PC-9 (cell line): ENCODE measurements at regions of chrX and their contacts with region 1.

Region 1: DNA sequence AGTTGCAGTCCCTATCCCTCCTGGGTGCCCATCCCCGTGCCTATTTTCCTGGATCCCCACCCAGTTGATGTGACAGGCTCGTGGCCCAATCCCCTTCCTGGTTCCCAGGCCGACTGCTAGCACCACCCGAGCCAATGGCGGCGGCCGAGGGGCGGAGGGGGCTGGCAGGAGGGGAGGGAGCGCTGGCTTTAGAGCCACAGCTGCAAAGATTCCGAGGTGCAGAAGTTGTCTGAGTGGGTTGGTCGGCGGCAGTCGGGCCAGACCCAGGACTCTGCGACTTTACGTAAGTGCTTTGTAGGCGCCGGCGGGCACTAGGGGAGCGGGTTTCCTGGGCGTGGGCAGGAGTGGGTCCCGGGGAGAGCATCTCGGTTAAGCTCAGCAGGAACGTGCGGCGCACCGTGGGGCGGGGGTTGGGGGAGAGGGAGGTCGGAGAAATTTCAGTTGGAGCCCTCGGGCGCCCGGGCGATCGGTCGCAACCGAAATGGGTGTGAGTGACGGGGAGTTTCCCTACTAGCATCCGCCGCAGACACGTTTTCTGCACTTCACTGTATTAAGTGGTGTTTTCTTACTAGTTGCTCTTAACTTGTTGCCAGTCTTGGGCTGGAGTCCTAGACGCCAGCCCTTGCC is at the start of gene PLS3:
- DNase-seq: peak; percentile 71 to 87
- H3K4me3 ChIP-seq: peak within 1 kb of the TSS; percentile 85
- H3K27ac ChIP-seq: peak within 1 kb of the TSS; percentile 96
- H3K4me1 ChIP-seq: peaks cover 40% of the 10 kb centered on the region
- H3K27me3 ChIP-seq: no peaks in the 10 kb centered on the region
- CTCF ChIP-seq: no peak; the same call in 1 of the 2 replicates
- total RNA-seq, gene PLS3: 221 and 257 TPM in 2 replicates

Region 2: DNA sequence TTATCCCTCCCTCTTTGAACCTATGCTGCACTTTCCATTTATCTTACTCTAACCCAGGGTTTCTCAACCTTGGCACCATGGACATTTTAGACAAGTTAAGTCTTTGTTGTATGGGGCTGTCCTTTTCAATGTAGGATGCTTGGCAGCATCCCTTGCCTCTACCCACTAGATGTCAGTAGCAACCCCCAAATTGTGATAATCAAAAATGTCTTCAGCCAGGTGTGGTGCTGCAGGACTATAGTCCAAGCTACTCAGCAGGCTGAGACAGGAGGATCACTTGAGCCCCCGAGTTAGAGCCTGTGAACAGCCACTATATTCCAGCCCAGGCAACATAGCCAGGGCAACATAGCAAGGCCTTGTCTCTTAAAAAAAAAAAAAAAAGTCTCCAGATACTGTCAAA is 334.2 kb before region 1 on chrX:
- CTCF ChIA-PET with region 1: no interaction called
- POLR2A ChIA-PET with region 1: no interaction called
- intact Hi-C with region 1: loop called (anchors 2 kb)
- DNase-seq: peak; percentile 27 to 63
- H3K4me3 ChIP-seq: no peak overlapping the region
- H3K27ac ChIP-seq: no peak overlapping the region
- H3K4me1 ChIP-seq: peaks cover 16% of the 10 kb centered on the region
- H3K27me3 ChIP-seq: no peaks in the 10 kb centered on the region
- CTCF ChIP-seq: peak; percentile 80

Region 3: DNA sequence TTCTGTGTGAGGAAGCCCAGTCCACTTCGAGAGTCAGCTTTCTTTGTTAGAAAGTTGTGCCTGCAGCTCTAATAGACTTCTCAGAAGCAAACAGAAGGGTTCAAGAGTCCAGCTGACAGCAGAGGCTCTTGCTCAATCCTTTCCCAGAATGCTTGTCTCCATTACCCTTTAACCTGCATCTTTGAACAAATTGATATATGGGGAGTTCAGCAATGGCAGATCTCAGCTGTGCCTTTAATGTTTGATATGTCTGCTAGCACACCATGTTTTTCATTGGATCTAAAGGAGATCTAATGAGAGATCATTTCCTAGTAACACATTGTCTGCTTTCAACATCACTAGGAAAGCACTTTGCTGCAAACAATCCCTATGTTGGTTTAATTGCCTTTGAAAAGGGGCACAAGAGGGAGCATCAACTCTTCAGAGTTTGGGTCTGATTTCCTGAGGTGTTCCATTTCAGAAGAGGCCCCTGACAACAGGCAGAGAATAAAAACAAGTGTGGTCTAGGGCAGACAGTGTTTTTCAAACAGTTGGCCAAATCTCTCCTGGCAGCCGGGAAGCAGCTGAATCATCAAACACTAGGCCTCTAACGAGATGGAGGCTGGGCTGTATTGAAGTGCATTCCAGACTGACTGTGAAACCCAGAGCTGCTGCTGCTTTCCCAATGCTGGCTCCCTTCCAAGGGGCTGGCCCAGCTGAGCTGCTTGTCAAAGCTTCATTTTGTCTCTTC is 216.0 kb before region 1 on chrX:
- CTCF ChIA-PET with region 1: no interaction called
- POLR2A ChIA-PET with region 1: no interaction called
- intact Hi-C with region 1: loop called (anchors 1 kb)
- DNase-seq: peak; percentile 87 to 91
- H3K4me3 ChIP-seq: 0 out of 2 replicates have a peak overlapping the region, but pooled peaks have one; percentile 21
- H3K27ac ChIP-seq: peak overlapping the region; percentile 75
- H3K4me1 ChIP-seq: peaks cover 17% of the 10 kb centered on the region
- H3K27me3 ChIP-seq: no peaks in the 10 kb centered on the region
- CTCF ChIP-seq: no peak

Region 4: DNA sequence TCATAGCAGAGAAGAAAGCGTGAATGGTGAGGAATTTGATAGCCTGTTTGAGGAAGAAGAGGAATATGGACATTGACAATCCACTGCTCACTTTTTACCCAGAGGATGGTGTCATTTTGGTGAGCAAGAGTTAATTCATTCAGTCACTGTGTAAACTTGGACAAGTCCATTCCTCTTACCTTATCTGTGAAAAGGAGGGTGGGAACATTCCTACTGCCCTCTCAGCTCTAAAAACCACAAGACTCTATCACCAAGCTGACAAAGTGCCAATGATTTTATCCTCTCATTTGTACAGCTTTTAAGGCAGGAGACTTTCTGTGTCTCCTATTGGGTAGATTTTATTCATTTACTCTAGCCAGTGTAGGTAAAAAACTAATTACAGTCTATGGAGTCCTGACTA is 167.8 kb before region 1 on chrX:
- CTCF ChIA-PET with region 1: no interaction called
- POLR2A ChIA-PET with region 1: interaction called, 5 read pairs
- intact Hi-C with region 1: loop called (anchors 1 kb)
- DNase-seq: peak; percentile 29 to 97
- H3K4me3 ChIP-seq: no peak overlapping the region
- H3K27ac ChIP-seq: peak overlapping the region; percentile 69
- H3K4me1 ChIP-seq: peaks cover 32% of the 10 kb centered on the region
- H3K27me3 ChIP-seq: no peaks in the 10 kb centered on the region
- CTCF ChIP-seq: no peak

Region 5: DNA sequence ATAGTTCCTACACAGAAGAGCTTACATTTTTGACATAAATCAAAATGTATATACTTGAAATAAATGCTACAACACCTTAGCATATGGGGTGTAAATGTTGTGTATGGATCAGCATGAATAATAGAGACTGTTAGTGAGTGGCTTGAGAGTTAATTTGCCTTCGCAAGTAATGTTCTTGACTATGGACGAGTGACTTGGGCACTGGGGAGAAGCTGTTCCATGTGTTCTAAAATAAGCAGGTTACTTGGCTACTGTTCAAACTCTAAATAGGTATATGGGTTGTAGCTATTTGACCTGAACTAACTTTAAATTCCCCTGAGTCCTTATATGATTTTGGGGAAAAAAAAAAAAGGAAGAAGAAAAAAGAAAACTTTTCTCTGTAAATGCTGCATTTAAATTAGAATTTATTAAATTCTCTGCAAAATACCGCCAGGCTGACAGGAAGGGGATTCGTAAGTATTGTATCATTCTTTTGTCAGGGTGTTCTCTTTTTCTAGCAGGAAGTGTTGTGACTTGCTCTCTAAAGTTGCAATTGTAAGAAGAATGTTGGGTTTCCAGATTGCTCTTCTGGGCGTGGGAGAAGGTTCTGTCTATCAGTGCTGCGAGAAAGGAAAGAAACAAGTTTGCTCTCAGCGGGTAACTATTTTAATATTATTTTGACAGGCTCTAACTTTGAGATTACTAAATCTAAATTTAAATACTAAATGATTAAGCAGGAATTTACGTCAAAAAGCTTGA is 32.1 kb after region 1 on chrX:
- CTCF ChIA-PET with region 1: no interaction called
- POLR2A ChIA-PET with region 1: interaction called, 13 read pairs
- intact Hi-C with region 1: loop called (anchors 1 kb)
- DNase-seq: peak in 1 of 2 experiments; percentile 92
- H3K4me3 ChIP-seq: peak overlapping the region; percentile 37; the same call in 1 of the 2 replicates
- H3K27ac ChIP-seq: peak overlapping the region; percentile 84
- H3K4me1 ChIP-seq: peaks cover 43% of the 10 kb centered on the region
- H3K27me3 ChIP-seq: no peaks in the 10 kb centered on the region
- CTCF ChIP-seq: no peak

Region 6: DNA sequence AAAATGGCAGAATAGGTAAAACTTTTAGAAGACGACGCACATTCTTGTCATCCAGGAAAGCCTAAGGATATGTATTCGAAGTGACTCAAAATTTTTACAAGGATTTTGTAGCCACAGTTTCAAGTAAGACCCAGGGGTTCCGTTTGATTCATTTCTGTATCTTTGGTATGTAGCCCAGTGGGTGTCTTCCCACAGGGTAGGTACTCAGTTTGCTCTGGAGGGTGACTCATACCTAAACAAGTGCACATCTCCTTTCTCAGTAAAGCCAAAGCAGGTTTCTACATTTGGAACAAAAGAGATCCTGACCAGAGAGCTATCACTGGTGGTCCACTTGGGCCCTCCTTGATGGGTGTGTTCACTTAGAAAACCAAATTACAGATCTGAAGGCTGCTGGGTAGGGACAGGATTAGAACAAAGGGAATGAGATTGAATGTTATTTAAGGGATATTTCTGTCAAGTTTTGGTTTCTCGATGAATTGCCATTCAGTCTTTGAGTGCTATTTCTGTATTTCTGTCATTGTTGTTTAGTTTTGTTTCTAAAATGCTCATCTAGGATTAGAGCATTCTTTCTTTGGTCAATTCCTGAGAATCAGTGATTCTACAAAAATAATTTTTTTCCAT is 56.0 kb after region 1 on chrX:
- CTCF ChIA-PET with region 1: no interaction called
- POLR2A ChIA-PET with region 1: interaction called, 6 read pairs
- intact Hi-C with region 1: loop called (anchors 1 kb)
- DNase-seq: peak; percentile 50 to 98
- H3K4me3 ChIP-seq: no peak overlapping the region
- H3K27ac ChIP-seq: peak overlapping the region; percentile 83
- H3K4me1 ChIP-seq: peaks cover 39% of the 10 kb centered on the region
- H3K27me3 ChIP-seq: no peaks in the 10 kb centered on the region
- CTCF ChIP-seq: no peak

Region 7: DNA sequence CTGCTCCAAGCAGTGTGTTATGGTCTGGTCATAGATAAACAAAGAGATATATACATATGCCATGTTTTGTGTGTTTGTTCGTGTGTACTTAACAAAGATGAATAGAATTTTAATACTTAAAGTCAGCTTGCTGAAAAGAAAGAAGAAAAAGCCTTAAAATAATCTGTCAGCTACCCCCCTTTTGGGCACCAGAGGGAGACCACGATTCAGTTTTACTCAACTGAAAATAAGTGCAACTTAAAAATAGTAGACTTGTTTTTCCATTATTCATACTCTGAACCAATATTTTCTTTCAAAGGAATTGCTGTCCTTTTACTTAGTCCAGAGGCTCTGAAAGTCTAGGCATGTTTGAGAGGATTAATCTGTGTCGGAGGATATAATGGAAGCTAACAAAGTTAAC is 427.7 kb after region 1 on chrX:
- CTCF ChIA-PET with region 1: no interaction called
- POLR2A ChIA-PET with region 1: no interaction called
- intact Hi-C with region 1: no loop called
- DNase-seq: no peak
- H3K4me3 ChIP-seq: no peak overlapping the region
- H3K27ac ChIP-seq: no peak overlapping the region
- H3K4me1 ChIP-seq: no peaks in the 10 kb centered on the region
- H3K27me3 ChIP-seq: no peaks in the 10 kb centered on the region
- CTCF ChIP-seq: peak; percentile 66